ENCODE measurements at regions of chr5 and their contacts with region 1.

Region 1: GRCh38 chr5:115180165-115180709 is 10.5 kb upstream of the TRIM36 start:
- DNase-seq: peak; percentile 50
- H3K27ac ChIP-seq: no peak overlapping the region
- CTCF ChIP-seq: no peak

Region 2: DNA sequence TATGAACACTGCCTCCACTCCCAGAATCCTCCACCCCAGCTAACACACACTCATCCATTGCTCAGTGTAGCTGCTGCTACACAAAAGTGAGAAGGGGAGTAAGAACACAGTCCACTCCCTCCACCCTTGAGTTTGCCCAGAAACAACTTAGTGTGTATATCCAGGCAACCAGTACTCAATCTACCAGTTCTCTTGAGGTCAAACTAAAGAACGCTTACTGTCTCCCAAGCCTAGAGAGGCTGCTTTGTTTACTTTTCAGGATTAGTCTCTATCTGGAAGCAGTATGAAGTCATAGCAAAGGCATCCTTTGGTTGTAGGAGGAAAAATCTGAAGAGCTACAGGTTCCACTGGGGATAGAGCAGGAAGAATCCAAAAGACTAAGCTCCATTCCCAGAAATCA is 522.0 kb before region 1 on chr5:
- CTCF ChIA-PET with region 1: interaction called, 11 read pairs
- POLR2A ChIA-PET with region 1: no interaction called
- DNase-seq: no peak
- H3K27ac ChIP-seq: no peak overlapping the region
- CTCF ChIP-seq: no peak

Region 3: DNA sequence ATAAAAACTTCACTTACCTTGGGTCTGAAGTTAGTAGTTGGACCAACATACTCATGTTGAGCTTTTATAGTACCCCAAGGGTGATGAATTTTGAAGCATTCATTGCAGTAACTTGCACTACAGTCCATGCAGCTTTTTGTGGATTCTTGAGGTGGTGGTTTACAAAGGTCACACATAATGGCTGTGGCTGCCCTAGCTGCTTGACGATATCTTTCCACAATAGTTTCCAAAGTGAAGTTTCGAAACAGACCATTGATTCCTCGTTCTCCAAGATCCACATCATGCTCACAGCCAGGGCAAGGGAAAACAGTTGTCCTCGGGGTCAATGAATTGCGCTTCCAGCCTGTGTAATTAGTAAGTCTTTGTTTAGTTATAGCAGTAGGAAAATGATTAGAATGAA is 33.2 kb before region 1 on chr5:
- CTCF ChIA-PET with region 1: no interaction called
- POLR2A ChIA-PET with region 1: no interaction called
- DNase-seq: no peak
- H3K27ac ChIP-seq: no peak overlapping the region
- CTCF ChIP-seq: no peak

Measured in RWPE1 (cell line).